Activated CD4-positive, alpha-beta memory T cell treated with anti-CD3 and anti-CD28 coated beads for 36 hours (primary cell): ENCODE measurements at regions of chr2 and their contacts with region 1.

Region 1: GRCh38 chr2:197705121-197705911 is at the start of gene MARS2:
- DNase-seq: peak; percentile 95
- H3K4me3 Mint-ChIP-seq: peak within 1 kb of the TSS; percentile 80
- H3K27ac Mint-ChIP-seq: peak within 1 kb of the TSS; percentile 88
- H3K4me1 Mint-ChIP-seq: peaks cover 41% of the 10 kb centered on the region
- H3K27me3 Mint-ChIP-seq: no peaks in the 10 kb centered on the region
- total RNA-seq, gene MARS2: 11.3 to 11.4 TPM

Region 2: DNA sequence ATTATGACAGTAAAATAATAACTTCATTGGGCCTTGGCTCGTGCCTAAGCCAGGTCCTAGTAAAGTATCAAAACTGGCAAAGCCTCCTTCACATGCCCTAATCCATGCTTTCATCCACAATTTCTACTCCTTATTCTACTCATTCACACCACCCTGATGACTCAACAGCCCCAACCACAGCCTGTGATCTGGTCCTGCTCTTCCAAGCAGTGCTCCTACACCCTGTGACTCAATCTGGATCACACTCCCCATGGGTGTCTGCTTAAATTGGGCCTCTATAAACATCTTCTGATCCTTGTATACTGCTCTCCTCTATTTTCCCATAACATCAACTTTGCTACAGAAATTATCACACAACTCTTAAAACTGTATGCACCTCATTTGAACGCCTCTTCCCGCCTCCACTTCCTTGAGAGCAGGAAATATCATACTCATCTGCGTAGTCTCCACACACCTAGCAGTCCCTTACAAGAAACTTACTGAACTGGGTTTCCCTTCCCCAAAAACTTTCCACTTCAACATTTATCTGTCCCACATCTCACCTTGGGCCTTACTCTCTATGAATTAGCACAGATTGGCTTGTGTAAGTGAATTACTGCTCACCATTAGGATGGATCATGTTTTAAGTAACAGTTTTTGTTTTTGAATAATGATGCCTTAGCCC is 921.8 kb before region 1 on chr2:
- CTCF ChIA-PET with region 1: no interaction called
- POLR2A ChIA-PET with region 1: no interaction called
- intact Hi-C with region 1: loop called (anchors 10 kb)
- DNase-seq: peak; percentile 71
- H3K4me3 Mint-ChIP-seq: no peak overlapping the region
- H3K27ac Mint-ChIP-seq: peak overlapping the region; percentile 64
- H3K4me1 Mint-ChIP-seq: peaks cover 15% of the 10 kb centered on the region
- H3K27me3 Mint-ChIP-seq: no peaks in the 10 kb centered on the region

Region 3: GRCh38 chr2:197209742-197210408 is 495.4 kb before region 1 on chr2:
- CTCF ChIA-PET with region 1: no interaction called
- POLR2A ChIA-PET with region 1: no interaction called
- intact Hi-C with region 1: loop called (anchors 10 kb)
- DNase-seq: peak; percentile 86
- H3K4me3 Mint-ChIP-seq: peak overlapping the region; percentile 58
- H3K27ac Mint-ChIP-seq: peak overlapping the region; percentile 94
- H3K4me1 Mint-ChIP-seq: peaks cover 98% of the 10 kb centered on the region
- H3K27me3 Mint-ChIP-seq: no peaks in the 10 kb centered on the region

Region 4: GRCh38 chr2:197499594-197500526 is 205.5 kb before region 1 on chr2 and contains the starts of genes HSPD1 and HSPE1:
- CTCF ChIA-PET with region 1: interaction called, 4 read pairs
- POLR2A ChIA-PET with region 1: interaction called, 6 read pairs
- intact Hi-C with region 1: loop called (anchors 1 kb)
- DNase-seq: peak; percentile 99
- H3K4me3 Mint-ChIP-seq: peak within 1 kb of the TSS; percentile 97
- H3K27ac Mint-ChIP-seq: peak within 1 kb of the TSS; percentile 97
- H3K4me1 Mint-ChIP-seq: peaks cover 56% of the 10 kb centered on the region
- H3K27me3 Mint-ChIP-seq: no peaks in the 10 kb centered on the region
- total RNA-seq, gene HSPD1: 839 to 853 TPM
- total RNA-seq, gene HSPE1: 282 to 283 TPM

Region 5: GRCh38 chr2:197827618-197828017 is 122.3 kb after region 1 on chr2:
- CTCF ChIA-PET with region 1: no interaction called
- POLR2A ChIA-PET with region 1: no interaction called
- intact Hi-C with region 1: no loop called
- DNase-seq: no peak
- H3K4me3 Mint-ChIP-seq: no peak overlapping the region
- H3K27ac Mint-ChIP-seq: no peak overlapping the region
- H3K4me1 Mint-ChIP-seq: no peaks in the 10 kb centered on the region
- H3K27me3 Mint-ChIP-seq: no peaks in the 10 kb centered on the region

Region 6: GRCh38 chr2:197838036-197838435 is 132.7 kb after region 1 on chr2:
- CTCF ChIA-PET with region 1: no interaction called
- POLR2A ChIA-PET with region 1: no interaction called
- intact Hi-C with region 1: loop called (anchors 5 kb)
- DNase-seq: peak; percentile 41
- H3K4me3 Mint-ChIP-seq: peak overlapping the region; percentile 52
- H3K27ac Mint-ChIP-seq: peak overlapping the region; percentile 71
- H3K4me1 Mint-ChIP-seq: peaks cover 46% of the 10 kb centered on the region
- H3K27me3 Mint-ChIP-seq: no peaks in the 10 kb centered on the region

Region 7: GRCh38 chr2:198296665-198297308 is 591.5 kb after region 1 on chr2:
- CTCF ChIA-PET with region 1: interaction called, 8 read pairs
- POLR2A ChIA-PET with region 1: no interaction called
- intact Hi-C with region 1: loop called (anchors 1 kb)
- DNase-seq: peak; percentile 67
- H3K4me3 Mint-ChIP-seq: no peak overlapping the region
- H3K27ac Mint-ChIP-seq: no peak overlapping the region
- H3K4me1 Mint-ChIP-seq: peaks cover 2% of the 10 kb centered on the region
- H3K27me3 Mint-ChIP-seq: peaks cover 9% of the 10 kb centered on the region